ENCODE measurements at regions of chr20 and their contacts with region 1.

Region 1: GRCh38 chr20:45362804-45363610 is at the start of gene SYS1:
- DNase-seq: peak; percentile 97 to 99 (median 99)
- ATAC-seq: peak; percentile 90
- H3K4me3 ChIP-seq: peak within 1 kb of the TSS; percentile 92
- H3K4me3 Mint-ChIP-seq: peak within 1 kb of the TSS; percentile 83 to 100 (median 97)
- H3K27ac ChIP-seq: peak within 1 kb of the TSS; percentile 99
- H3K27ac Mint-ChIP-seq: peak within 1 kb of the TSS; percentile 92 to 100 (median 99)
- H3K4me1 ChIP-seq: peaks cover 24 to 30% of the 10 kb centered on the region in 2 donors
- H3K4me1 Mint-ChIP-seq: peaks cover 24 to 56% (median 47%) of the 10 kb centered on the region in 7 donors
- H3K27me3 ChIP-seq: no peaks in the 10 kb centered on the region
- H3K27me3 Mint-ChIP-seq: peaks cover 0 to 2% (median 0%) of the 10 kb centered on the region in 5 donors
- total RNA-seq, gene SYS1: 23.9 to 111 (median 67.1) TPM

Region 2: DNA sequence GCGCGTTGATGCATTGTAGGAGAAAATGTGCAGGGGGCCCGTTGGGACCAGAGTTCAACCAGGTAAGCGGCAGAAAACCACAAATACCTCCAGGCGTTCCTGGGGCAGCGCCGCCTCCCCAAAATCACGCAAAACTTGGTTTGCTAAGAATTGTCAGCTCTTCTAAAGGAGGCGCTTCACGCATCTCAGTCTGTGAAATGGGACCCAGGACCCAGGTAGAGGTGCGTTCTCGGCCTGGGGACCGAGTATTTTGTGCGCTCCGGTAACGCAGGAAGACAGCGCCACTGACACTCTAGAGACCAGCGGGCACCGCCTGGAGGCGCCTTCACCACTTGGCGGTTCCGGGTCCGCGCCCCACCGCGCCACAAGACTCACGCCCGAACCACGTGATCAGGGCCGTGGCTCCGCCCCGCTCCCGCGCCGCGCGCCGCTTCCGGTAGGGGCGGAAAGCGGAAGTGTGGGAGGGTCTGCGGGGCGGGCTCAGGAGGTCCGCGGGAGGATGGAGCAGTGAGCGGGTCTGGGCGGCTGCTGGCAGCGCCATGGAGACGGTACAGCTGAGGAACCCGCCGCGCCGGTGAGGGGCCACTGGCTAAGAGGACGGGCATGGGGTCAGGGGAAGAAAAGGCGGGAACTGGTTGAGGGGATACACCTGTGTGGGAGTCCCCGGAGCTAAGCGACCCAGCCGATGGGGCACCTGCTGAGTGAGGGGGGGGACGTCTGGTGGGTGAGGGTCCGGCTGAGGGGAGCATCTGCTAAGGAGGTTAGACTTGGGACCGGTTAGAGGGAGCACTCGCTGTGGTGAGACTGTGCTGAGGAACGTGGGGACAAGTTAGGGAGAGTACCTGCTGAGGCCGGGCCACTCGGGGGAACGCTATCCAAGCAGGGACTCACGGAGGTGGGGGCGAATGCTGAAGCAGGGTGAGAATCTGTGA is 396.7 kb before region 1 on chr20 and contains the start of gene STK4:
- CTCF ChIA-PET with region 1: no interaction called
- POLR2A ChIA-PET with region 1: no interaction called
- intact Hi-C with region 1: loop called (anchors 10 kb)
- DNase-seq: peak; percentile 93 to 98 (median 96)
- ATAC-seq: peak; percentile 93
- H3K4me3 ChIP-seq: peak within 1 kb of the TSS; percentile 75
- H3K4me3 Mint-ChIP-seq: peak within 1 kb of the TSS; percentile 93 to 100 (median 95)
- H3K27ac ChIP-seq: peak within 1 kb of the TSS; percentile 91
- H3K27ac Mint-ChIP-seq: peak within 1 kb of the TSS; percentile 80 to 98 (median 90)
- H3K4me1 ChIP-seq: peaks cover 16 to 17% of the 10 kb centered on the region in 2 donors
- H3K4me1 Mint-ChIP-seq: peaks cover 32 to 60% (median 55%) of the 10 kb centered on the region in 7 donors
- H3K27me3 ChIP-seq: no peaks in the 10 kb centered on the region
- H3K27me3 Mint-ChIP-seq: no peaks in the 10 kb centered on the region
- total RNA-seq, gene STK4: 207 to 383 (median 267) TPM

Region 3: DNA sequence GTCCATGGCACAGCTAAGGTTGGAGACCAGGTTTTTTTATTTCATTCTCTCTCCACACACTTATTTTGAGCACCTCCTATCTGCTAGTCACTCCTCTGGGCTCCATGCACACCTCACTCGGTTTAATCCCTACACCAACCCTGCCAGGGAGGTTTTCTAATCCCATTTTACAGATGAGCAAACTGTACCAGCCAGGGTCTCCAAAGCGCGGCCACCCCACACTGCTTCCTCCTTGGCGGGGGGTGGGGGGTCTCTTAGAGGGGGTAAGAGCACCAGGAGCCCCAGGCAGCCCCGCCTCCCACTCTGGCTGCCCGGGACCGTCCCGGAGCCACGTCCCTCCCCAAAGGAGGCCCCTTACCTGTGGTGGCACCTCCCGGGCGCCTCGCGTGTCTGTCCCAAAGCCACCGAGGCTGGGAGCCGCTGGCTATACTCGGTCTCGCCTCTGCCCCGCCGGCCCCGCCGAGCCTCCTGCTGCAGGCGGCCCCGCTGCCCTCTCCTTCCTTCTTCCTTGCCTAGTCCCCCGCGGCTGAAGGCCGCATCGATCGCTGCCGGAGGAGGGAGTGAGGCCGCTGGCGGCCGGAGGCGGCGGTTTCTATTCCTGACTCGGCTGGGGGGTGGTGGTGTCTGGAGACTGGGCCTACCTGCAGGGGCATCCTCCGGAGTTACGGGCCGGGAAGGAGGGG is 262.3 kb before region 1 on chr20 and contains the start of gene KCNS1:
- CTCF ChIA-PET with region 1: no interaction called
- POLR2A ChIA-PET with region 1: no interaction called
- intact Hi-C with region 1: no loop called
- DNase-seq: no peak
- ATAC-seq: no peak
- H3K4me3 ChIP-seq: no peak within 1 kb of the TSS
- H3K4me3 Mint-ChIP-seq: peak within 1 kb of the TSS in 4 of 10 donors; percentile 18 to 66 (median 39)
- H3K27ac ChIP-seq: no peak within 1 kb of the TSS
- H3K27ac Mint-ChIP-seq: no peak within 1 kb of the TSS
- H3K4me1 ChIP-seq: peaks cover 0 to 6% of the 10 kb centered on the region in 2 donors
- H3K4me1 Mint-ChIP-seq: peaks cover 5 to 21% (median 15%) of the 10 kb centered on the region in 7 donors
- H3K27me3 ChIP-seq: peaks cover 7 to 21% of the 10 kb centered on the region in 2 donors
- H3K27me3 Mint-ChIP-seq: peaks cover 39 to 67% (median 46%) of the 10 kb centered on the region in 5 donors
- total RNA-seq, gene KCNS1: 0.12 TPM in 1 of 5 experiments, not detected in the others

Region 4: GRCh38 chr20:45406259-45407066 is 43.5 kb after region 1 on chr20:
- CTCF ChIA-PET with region 1: interaction called, 5 read pairs
- POLR2A ChIA-PET with region 1: interaction called, 15 read pairs
- intact Hi-C with region 1: loop called in 1 of 2 experiments (anchors 1 kb)
- DNase-seq: peak in 8 of 9 donors; percentile 22 to 68 (median 44)
- ATAC-seq: peak; percentile 58
- H3K4me3 ChIP-seq: peak overlapping the region; percentile 71
- H3K4me3 Mint-ChIP-seq: peak overlapping the region; percentile 82 to 92 (median 85)
- H3K27ac ChIP-seq: peak overlapping the region; percentile 74
- H3K27ac Mint-ChIP-seq: peak overlapping the region in 8 of 9 donors; percentile 51 to 90 (median 78)
- H3K4me1 ChIP-seq: peaks cover 0 to 7% of the 10 kb centered on the region in 2 donors
- H3K4me1 Mint-ChIP-seq: peaks cover 5 to 27% (median 21%) of the 10 kb centered on the region in 7 donors
- H3K27me3 ChIP-seq: no peaks in the 10 kb centered on the region
- H3K27me3 Mint-ChIP-seq: peaks cover 0 to 19% (median 0%) of the 10 kb centered on the region in 5 donors

Region 5: GRCh38 chr20:45444050-45444449 is 81.0 kb after region 1 on chr20:
- CTCF ChIA-PET with region 1: interaction called, 146 read pairs
- POLR2A ChIA-PET with region 1: interaction called, 10 read pairs
- intact Hi-C with region 1: loop called in 1 of 2 experiments (anchors 1 kb)
- DNase-seq: peak in 6 of 9 donors; percentile 31 to 62 (median 44)
- ATAC-seq: peak; percentile 82
- H3K4me3 ChIP-seq: no peak overlapping the region
- H3K4me3 Mint-ChIP-seq: peak overlapping the region in 5 of 10 donors; percentile 3 to 48 (median 15)
- H3K27ac ChIP-seq: no peak overlapping the region
- H3K27ac Mint-ChIP-seq: no peak overlapping the region
- H3K4me1 ChIP-seq: peaks cover 9 to 14% of the 10 kb centered on the region in 2 donors
- H3K4me1 Mint-ChIP-seq: peaks cover 13 to 36% (median 27%) of the 10 kb centered on the region in 7 donors
- H3K27me3 ChIP-seq: peaks cover 0 to 4% of the 10 kb centered on the region in 2 donors
- H3K27me3 Mint-ChIP-seq: peaks cover 0 to 35% (median 6%) of the 10 kb centered on the region in 5 donors

Region 6: DNA sequence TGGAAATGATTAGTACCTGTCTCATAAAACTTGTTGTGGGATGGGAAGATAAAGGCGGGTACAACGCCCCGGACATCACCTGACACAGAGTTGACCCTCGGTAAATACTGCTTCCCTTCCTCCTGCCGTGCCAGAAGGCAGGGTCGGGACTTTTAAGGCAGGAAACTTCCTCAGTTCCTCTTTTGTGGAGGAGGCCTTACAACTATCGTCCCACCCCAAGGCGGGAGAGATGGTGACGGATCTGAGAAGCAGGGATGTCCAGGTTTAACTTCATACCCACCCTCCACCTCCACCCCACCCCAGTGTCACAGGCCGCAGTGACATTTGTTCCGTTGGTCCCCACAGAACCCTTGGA is 429.3 kb after region 1 on chr20:
- CTCF ChIA-PET with region 1: no interaction called
- POLR2A ChIA-PET with region 1: no interaction called
- intact Hi-C with region 1: loop called (anchors 2 to 5 kb)
- DNase-seq: peak in 1 of 9 donors; percentile 9
- ATAC-seq: peak; percentile 39
- H3K4me3 ChIP-seq: peak overlapping the region; percentile 70
- H3K4me3 Mint-ChIP-seq: peak overlapping the region; percentile 85 to 99 (median 92)
- H3K27ac ChIP-seq: peak overlapping the region; percentile 96
- H3K27ac Mint-ChIP-seq: peak overlapping the region; percentile 87 to 99 (median 93)
- H3K4me1 ChIP-seq: peaks cover 5 to 10% of the 10 kb centered on the region in 2 donors
- H3K4me1 Mint-ChIP-seq: peaks cover 13 to 28% (median 20%) of the 10 kb centered on the region in 7 donors
- H3K27me3 ChIP-seq: no peaks in the 10 kb centered on the region
- H3K27me3 Mint-ChIP-seq: peaks cover 0 to 5% (median 0%) of the 10 kb centered on the region in 5 donors

Measured in naive thymus-derived CD4-positive, alpha-beta T cell (primary cell).